Right ventricle myocardium superior (tissue), 1 donor: ENCODE measurements at regions of chr11 and their contacts with region 1.

Region 1: GRCh38 chr11:8099291-8099899 is 18.4 kb downstream of the TUB start:
- DNase-seq: peak; percentile 85
- ATAC-seq: peak; percentile 67

Region 2: GRCh38 chr11:8006349-8006977 is 92.9 kb before region 1 on chr11:
- intact Hi-C with region 1: loop called (anchors 2 kb)
- DNase-seq: no peak
- ATAC-seq: peak; percentile 93

Region 3: DNA sequence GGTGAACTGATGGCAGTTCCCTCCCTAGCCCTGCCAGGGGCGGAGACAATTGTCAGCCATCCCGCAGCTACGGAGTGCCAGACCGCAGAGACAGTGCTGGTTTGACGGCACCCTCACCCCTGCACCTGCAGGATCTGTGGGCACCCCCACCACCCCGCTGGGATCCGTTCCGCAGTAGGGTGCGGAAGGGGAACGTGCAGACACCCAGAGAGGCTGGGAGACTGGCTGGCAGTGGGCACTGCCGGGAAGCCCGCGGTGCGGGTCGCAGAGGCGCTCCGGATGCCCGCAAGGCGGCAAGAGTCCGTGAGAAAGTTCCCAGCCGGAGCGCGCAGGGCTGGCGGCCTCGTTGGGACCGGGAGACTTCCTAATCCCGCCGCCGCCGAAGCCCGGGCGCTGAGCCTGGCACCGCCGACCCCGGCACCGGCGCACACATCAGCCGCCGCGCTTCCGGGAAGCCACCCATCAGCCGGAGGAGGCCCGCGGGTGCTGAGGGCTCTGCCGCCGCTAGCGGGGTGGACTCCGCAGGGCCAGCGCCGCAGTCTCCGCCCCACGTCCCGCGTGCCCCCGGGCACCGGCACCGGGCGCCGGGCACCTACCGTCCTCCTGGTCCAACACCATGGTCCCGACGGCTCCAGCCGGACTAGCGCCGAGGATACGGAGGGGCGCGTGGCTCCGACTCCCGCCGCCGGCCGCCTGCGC is 168.6 kb after region 1 on chr11:
- intact Hi-C with region 1: no loop called
- DNase-seq: peak; percentile 48
- ATAC-seq: peak; percentile 40